ENCODE measurements at regions of chr18 and their contacts with region 1.

Region 1: GRCh38 chr18:67845035-67845434 is 328.5 kb upstream of the DSEL start:
- DNase-seq: peak; percentile 13
- H3K4me3 ChIP-seq: no peak overlapping the region
- H3K27ac ChIP-seq: no peak overlapping the region
- H3K4me1 ChIP-seq: no peaks in the 10 kb centered on the region
- H3K27me3 ChIP-seq: no peaks in the 10 kb centered on the region
- CTCF ChIP-seq: peak; percentile 9 to 53

Region 2: GRCh38 chr18:67243799-67244587 is 601.0 kb before region 1 on chr18:
- CTCF ChIA-PET with region 1: no interaction called
- dilution Hi-C with region 1: no loop called
- in situ Hi-C with region 1: loop called in 1 of 2 experiments (anchors 25 kb)
- intact Hi-C with region 1: no loop called
- DNase-seq: peak; percentile 20
- H3K4me3 ChIP-seq: peak overlapping the region in 2 of 3 experiments; percentile 26 to 30
- H3K27ac ChIP-seq: peak overlapping the region; percentile 46
- H3K4me1 ChIP-seq: peaks cover 12% of the 10 kb centered on the region
- H3K27me3 ChIP-seq: no peaks in the 10 kb centered on the region
- CTCF ChIP-seq: no peak

Region 3: GRCh38 chr18:67705748-67706147 is 139.3 kb before region 1 on chr18:
- CTCF ChIA-PET with region 1: no interaction called
- dilution Hi-C with region 1: no loop called
- in situ Hi-C with region 1: no loop called
- intact Hi-C with region 1: loop called (anchors 10 kb)
- DNase-seq: no peak
- H3K4me3 ChIP-seq: no peak overlapping the region
- H3K27ac ChIP-seq: no peak overlapping the region
- H3K4me1 ChIP-seq: no peaks in the 10 kb centered on the region
- H3K27me3 ChIP-seq: no peaks in the 10 kb centered on the region
- CTCF ChIP-seq: peak in 1 of 2 donors; percentile 35

Region 4: DNA sequence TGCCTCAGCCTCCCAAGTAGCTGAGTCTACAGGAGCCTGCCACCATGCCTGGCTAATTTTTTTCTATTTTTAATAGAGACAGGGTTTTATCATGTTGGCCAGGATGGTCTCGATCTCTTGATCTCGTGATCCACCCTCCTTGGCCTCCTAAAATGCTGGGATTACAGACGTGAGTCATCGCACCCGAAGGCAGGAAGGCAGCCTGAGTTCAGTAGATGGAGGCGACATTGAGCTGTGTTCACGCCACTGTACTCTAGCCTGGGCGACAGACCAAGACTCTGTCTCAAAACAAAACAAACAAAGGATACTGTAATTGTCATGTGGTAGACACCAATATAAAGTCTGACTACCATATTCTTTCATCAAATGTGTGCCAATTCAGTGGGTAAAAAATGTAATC is 172.3 kb after region 1 on chr18:
- CTCF ChIA-PET with region 1: no interaction called
- dilution Hi-C with region 1: no loop called
- in situ Hi-C with region 1: no loop called
- intact Hi-C with region 1: no loop called
- DNase-seq: no peak
- H3K4me3 ChIP-seq: no peak overlapping the region
- H3K27ac ChIP-seq: no peak overlapping the region
- H3K4me1 ChIP-seq: no peaks in the 10 kb centered on the region
- H3K27me3 ChIP-seq: no peaks in the 10 kb centered on the region
- CTCF ChIP-seq: no peak

Measured in mammary epithelial cell (primary cell).